Lower leg skin (tissue), 4 donors: ENCODE measurements at regions of chr7 and their contacts with region 1.

Region 1: DNA sequence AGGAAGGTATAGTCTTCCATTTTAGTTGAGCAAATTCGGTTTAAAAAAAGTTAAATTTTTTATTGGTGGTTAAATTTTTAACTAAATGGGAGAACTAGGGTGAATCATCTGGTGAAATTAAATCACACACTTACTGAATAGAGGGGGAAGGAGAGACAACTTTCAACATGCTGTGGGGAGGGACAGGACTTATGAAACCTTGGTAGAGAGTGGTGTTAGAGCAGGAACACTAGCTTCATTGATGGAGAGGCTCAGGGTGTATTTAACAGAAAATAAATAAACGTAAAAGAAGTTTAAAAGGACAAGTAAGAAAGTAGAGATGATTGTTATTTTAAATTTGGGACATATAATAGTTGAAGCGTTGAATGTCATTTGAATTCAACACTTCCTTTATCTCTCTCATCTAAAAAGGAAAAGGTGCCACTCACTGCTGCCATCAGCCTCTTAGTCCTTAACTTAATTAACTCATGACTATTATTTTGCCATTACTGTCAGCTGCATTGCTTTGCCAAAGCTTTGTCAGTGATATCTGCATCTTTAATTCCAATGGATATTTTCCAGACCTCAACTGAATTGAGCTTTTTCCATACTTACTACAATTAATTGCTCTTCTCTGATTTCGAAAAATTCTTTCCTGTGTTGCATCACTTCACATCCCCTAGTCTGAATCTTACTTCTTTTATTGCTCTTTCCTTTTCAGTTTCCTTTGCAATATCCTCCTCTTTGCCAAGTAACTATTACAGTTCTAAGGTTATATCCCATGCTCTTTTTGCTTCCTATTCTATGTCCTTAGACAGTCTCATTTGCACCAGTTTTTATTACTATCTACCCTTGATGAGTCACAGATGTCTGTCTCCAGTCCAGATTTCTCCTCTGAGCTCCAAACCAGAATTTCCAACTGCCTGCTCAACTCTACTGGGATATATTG is 71.7 kb downstream of the GNAT3 start:
- DNase-seq: no peak
- H3K4me3 ChIP-seq: no peak overlapping the region
- CTCF ChIP-seq: no peak
- POLR2A ChIP-seq: no peak

Region 2: DNA sequence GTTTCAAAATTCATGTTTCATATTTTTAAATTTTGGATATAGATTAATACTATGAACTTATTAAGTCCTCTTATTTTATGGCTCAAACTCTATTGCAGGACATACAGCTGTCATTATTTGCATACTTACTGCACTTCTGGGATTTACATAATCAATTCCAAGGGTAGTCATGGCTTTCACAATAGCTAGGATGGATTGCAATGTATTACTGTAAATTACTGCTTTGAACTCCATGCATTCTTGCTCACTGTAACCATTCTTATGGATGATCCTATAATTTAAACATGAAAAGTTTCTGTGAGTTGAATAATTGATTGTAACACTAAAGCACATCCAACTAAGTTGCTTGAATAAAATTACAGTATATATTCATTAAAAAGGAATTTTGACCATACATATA is 48.2 kb after region 1 on chr7:
- intact Hi-C with region 1: no loop called
- DNase-seq: no peak
- H3K4me3 ChIP-seq: no peak overlapping the region
- CTCF ChIP-seq: no peak
- POLR2A ChIP-seq: no peak

Region 3: DNA sequence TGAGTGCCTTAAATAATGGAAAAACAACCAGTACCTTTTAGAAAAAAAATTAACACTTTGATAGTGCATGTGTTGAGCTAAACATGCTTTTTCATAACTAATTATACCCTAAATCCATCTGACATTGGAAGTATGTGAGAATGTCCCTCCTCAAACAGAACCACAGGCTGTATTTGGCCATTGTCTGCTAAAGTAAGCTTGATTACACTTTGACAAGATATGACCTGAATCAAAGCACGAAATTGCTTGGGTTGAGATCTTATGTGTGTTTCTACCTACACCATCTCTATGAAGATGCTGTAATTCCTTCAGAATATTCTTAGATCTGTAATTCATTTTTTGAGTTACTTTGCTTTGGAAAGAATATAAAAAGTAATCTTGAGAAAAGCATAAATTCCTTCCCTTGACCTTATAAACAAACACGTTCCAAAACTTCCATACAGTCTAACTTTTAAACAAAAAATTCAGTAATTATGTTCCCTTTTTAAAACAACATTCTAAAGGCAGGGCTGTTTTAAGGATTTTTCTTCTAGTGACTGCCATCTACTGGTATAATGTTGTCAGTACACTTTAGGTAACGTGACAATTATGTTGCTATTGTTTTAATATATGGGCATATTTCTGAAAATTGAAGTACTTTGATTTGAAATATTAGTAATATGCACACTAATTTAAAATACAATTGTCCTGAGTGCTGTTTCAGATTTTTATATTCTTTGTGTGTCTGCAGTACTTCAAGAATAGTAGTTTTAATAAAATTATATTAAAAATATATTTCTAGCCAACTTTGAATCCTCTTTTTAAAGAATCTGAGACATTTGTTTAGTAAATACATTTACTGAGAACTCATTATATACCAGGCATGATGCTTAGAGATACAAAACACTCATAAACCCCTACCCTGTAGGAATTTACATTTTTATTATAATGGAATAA is 219.2 kb after region 1 on chr7:
- intact Hi-C with region 1: loop called (anchors 5 kb)
- DNase-seq: no peak
- H3K4me3 ChIP-seq: no peak overlapping the region
- CTCF ChIP-seq: no peak
- POLR2A ChIP-seq: no peak